Left cardiac atrium (tissue), 4 donors: ENCODE measurements at regions of chr5 and their contacts with region 1.

Region 1: DNA sequence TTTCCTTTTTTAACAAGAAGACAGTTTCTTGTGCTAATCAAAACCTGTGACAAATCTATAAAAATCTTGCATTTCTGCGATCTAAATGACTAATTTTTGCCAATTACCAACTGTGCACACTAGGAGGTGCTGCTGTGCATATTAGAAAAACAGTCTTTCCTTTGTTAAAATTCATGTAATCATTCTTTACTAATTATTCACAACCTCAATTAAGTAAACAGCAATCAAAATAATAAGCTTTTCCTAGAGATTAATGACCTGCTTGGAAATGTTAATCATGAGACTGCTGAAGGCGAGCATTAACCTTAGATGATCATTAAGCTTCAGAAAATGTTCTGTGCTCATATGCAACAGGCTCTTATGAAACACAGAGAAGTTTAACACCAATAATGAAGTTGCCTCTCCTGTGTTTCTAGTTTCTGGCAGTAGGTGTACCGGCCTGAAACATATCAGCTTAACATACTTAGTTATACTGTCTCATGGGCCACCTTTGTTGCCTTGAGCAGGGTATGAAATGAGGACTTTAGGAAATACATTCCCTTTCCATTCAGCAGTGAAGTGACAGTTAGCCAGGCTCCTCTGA is 17.7 kb downstream of the RFESD start:
- DNase-seq: no peak
- ATAC-seq: no peak

Region 2: GRCh38 chr5:95718203-95718602 is 53.9 kb after region 1 on chr5:
- intact Hi-C with region 1: no loop called
- DNase-seq: no peak
- ATAC-seq: no peak

Region 3: DNA sequence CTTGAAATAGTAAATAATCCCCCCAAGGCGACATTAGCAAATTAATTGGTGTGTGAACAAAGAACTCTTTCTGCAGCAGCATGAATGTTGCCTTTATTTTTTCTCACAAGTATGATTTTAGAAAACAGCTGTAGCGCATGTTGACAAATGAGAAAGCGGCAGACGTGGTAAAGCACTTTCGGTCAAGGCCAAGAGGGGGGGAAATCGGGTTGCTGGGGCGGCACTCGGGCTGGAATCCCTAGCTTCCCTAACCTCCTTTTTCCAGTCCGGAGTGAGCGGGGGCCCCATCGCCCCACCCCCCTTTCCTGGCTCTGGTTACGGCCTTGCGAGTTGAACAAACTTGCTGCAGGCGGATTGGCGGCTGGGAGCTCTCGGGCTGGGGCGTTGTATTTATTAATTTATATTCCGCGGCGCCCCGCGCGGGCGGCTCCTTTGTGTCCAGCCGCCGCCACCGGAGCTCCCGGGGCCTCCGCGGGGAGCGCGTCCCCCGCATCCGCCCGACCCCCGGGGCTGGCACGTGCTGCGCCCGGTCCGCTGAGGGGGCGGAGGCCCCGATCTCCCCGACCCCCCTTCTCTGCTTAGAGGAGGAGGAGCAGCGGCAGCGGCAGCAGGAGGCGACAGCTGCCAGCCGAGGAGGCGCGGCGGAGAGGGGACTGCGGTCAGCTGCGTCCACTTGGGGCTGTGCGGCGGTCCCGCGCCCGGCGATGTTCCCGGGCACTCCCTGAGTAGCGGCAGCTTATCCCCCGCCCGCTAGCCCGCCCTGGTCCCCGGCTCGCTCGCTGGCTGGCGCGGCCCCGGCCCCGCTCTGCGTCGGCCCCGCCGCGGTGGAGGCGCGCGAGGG is 66.7 kb after region 1 on chr5 and contains the start of gene RHOBTB3:
- intact Hi-C with region 1: loop called in 1 of 2 experiments (anchors 5 kb)
- DNase-seq: peak; percentile 92
- ATAC-seq: peak; percentile 82 to 83
- total RNA-seq, gene RHOBTB3: 101 to 110 TPM

Region 4: GRCh38 chr5:95773335-95774059 is 109.2 kb after region 1 on chr5:
- intact Hi-C with region 1: loop called (anchors 5 to 10 kb)
- DNase-seq: no peak
- ATAC-seq: peak in 1 of 2 donors; percentile 50

Region 5: DNA sequence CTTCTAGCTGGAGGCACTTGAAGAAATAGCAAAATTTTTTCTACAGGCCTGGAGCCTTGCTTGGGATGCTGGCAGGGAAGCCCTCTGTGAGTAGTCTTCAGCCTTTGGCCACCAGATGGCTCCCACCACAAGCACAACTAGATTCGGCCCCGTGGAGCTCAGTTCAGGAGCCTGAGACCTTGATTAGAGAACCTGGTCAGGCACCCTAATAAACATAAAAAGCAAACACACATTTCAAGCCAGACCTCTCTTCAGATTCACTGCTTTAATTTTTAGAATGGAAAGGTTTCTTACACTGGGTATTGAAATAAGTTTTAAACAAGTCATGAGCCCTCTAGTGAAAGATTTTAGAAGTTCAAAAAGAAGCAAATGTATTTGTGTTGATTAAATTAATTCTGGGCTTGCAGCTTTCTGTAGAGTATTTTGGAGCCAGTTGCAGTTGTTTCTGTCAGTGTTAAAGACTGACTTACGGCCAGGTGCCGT is 116.8 kb after region 1 on chr5:
- intact Hi-C with region 1: loop called (anchors 5 to 10 kb)
- DNase-seq: peak; percentile 85
- ATAC-seq: peak; percentile 92 to 95